HepG2 (cell line): ENCODE measurements at regions of chr2 and their contacts with region 1.

Region 1: GRCh38 chr2:15577071-15577735 is 14.5 kb upstream of the DDX1 start:
- DNase-seq: peak; percentile 85
- ATAC-seq: peak; percentile 92
- H3K4me3 ChIP-seq: no peak overlapping the region
- H3K27ac ChIP-seq: no peak overlapping the region
- H3K4me1 ChIP-seq: peaks cover 68% of the 10 kb centered on the region
- H3K27me3 ChIP-seq: no peaks in the 10 kb centered on the region
- CTCF ChIP-seq: peak; percentile 95
- EP300 ChIP-seq: no peak
- POLR2A ChIP-seq: no peak
- RAD21 ChIP-seq: peak; percentile 77

Region 2: GRCh38 chr2:14903709-14904374 is 673.4 kb before region 1 on chr2:
- CTCF ChIA-PET with region 1: no interaction called
- POLR2A ChIA-PET with region 1: no interaction called
- in situ Hi-C with region 1: loop called (anchors 25 kb)
- intact Hi-C with region 1: no loop called
- DNase-seq: peak; percentile 72
- ATAC-seq: peak; percentile 99
- H3K4me3 ChIP-seq: no peak overlapping the region
- H3K27ac ChIP-seq: no peak overlapping the region
- H3K4me1 ChIP-seq: no peaks in the 10 kb centered on the region
- H3K27me3 ChIP-seq: no peaks in the 10 kb centered on the region; a peak in 1 of 5 replicates
- CTCF ChIP-seq: peak; percentile 87
- EP300 ChIP-seq: no peak
- POLR2A ChIP-seq: no peak
- RAD21 ChIP-seq: peak; percentile 89

Region 3: GRCh38 chr2:15058015-15058720 is 519.0 kb before region 1 on chr2:
- CTCF ChIA-PET with region 1: no interaction called
- POLR2A ChIA-PET with region 1: no interaction called
- in situ Hi-C with region 1: no loop called
- intact Hi-C with region 1: loop called (anchors 10 kb)
- DNase-seq: peak; percentile 35
- ATAC-seq: peak; percentile 87
- H3K4me3 ChIP-seq: no peak overlapping the region
- H3K27ac ChIP-seq: no peak overlapping the region
- H3K4me1 ChIP-seq: no peaks in the 10 kb centered on the region
- H3K27me3 ChIP-seq: peaks cover 0 to 22% of the 10 kb centered on the region in 2 experiments; a peak in 2 of 5 replicates
- CTCF ChIP-seq: peak; percentile 35; the same call in 1 of the 2 replicates
- EP300 ChIP-seq: no peak
- POLR2A ChIP-seq: no peak
- RAD21 ChIP-seq: no peak

Region 4: DNA sequence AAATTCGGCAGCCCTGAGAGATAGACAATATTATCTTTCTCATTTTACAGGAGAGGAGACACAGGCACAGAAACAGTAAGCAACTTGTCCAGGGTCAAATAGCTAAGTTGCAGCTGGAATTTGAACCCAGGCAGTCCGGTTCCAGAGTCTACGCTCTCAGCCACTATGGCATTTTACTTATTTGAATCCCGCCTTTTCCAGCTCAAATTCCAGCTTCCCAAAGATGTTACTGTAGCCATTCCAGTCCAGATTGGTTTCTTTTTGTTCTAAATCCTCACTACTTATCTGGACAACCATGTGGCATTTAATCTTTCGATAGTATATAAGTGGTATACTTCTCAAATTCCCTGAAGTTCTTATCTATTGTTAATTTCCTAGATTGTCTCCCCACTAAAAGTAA is 141.7 kb before region 1 on chr2:
- CTCF ChIA-PET with region 1: interaction called, 3 read pairs
- POLR2A ChIA-PET with region 1: no interaction called
- in situ Hi-C with region 1: loop called (anchors 10 kb)
- intact Hi-C with region 1: loop called (anchors 1 kb)
- DNase-seq: peak; percentile 86
- ATAC-seq: peak; percentile 96
- H3K4me3 ChIP-seq: no peak overlapping the region; a peak in 1 of 6 replicates
- H3K27ac ChIP-seq: peak overlapping the region; percentile 63
- H3K4me1 ChIP-seq: peaks cover 42% of the 10 kb centered on the region
- H3K27me3 ChIP-seq: no peaks in the 10 kb centered on the region
- CTCF ChIP-seq: no peak
- EP300 ChIP-seq: peak in 1 of 2 experiments; percentile 72; a peak in 1 of 4 replicates
- POLR2A ChIP-seq: no peak
- RAD21 ChIP-seq: no peak